BJ (cell line): ENCODE measurements at regions of chr4 and their contacts with region 1.

Region 1: GRCh38 chr4:7857238-7857701 is 82.4 kb downstream of the AFAP1 start:
- DNase-seq: peak; percentile 90
- H3K4me3 ChIP-seq: no peak overlapping the region
- H3K27me3 ChIP-seq: no peaks in the 10 kb centered on the region
- CTCF ChIP-seq: no peak

Region 2: DNA sequence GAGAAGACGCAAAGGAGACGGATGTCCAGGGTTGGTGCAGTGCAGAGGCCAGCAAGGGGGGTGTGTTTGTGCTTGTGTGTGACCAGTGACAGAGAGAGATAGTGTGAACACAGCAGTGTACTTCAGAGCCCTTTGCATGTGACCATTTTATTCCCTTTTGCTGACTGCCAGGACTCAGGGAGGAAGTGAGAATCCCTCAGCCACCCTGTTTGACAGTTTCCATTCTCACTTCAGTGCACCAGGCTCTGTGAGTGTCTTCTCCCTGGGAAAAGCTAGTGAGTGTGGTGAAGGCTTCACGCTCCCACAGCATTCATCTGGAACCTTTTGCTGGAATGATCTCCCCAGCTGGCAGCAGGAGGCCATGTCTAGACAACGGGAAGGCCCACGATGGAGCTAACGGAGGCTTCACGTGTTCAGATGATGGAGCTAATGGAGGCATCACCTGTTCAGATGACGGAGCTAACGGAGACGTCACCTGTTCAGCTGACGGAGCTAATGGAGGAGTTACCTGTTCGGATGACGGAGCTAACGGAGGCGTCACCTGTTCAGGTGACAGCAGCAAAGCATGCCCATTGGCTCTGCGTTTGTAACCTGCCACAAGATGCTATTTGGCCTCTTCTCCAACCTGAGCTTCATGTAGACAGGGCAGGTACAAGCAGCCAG is 113.0 kb before region 1 on chr4:
- CTCF ChIA-PET with region 1: no interaction called
- POLR2A ChIA-PET with region 1: no interaction called
- DNase-seq: no peak
- H3K4me3 ChIP-seq: no peak overlapping the region
- H3K27me3 ChIP-seq: no peaks in the 10 kb centered on the region
- CTCF ChIP-seq: no peak

Region 3: GRCh38 chr4:7843831-7844593 is 13.3 kb before region 1 on chr4:
- CTCF ChIA-PET with region 1: interaction called, 4 read pairs
- POLR2A ChIA-PET with region 1: interaction called, 11 read pairs
- DNase-seq: no peak
- H3K4me3 ChIP-seq: no peak overlapping the region
- H3K27me3 ChIP-seq: no peaks in the 10 kb centered on the region
- CTCF ChIP-seq: peak; percentile 62